ENCODE measurements at regions of chr13 and their contacts with region 1.

Region 1: GRCh38 chr13:105863300-105863920 is 672.1 kb downstream of the EFNB2 start:
- DNase-seq: no peak
- H3K4me3 ChIP-seq: no peak overlapping the region
- H3K27ac ChIP-seq: no peak overlapping the region
- H3K4me1 ChIP-seq: no peaks in the 10 kb centered on the region
- H3K27me3 ChIP-seq: no peaks in the 10 kb centered on the region
- CTCF ChIP-seq: no peak

Region 2: DNA sequence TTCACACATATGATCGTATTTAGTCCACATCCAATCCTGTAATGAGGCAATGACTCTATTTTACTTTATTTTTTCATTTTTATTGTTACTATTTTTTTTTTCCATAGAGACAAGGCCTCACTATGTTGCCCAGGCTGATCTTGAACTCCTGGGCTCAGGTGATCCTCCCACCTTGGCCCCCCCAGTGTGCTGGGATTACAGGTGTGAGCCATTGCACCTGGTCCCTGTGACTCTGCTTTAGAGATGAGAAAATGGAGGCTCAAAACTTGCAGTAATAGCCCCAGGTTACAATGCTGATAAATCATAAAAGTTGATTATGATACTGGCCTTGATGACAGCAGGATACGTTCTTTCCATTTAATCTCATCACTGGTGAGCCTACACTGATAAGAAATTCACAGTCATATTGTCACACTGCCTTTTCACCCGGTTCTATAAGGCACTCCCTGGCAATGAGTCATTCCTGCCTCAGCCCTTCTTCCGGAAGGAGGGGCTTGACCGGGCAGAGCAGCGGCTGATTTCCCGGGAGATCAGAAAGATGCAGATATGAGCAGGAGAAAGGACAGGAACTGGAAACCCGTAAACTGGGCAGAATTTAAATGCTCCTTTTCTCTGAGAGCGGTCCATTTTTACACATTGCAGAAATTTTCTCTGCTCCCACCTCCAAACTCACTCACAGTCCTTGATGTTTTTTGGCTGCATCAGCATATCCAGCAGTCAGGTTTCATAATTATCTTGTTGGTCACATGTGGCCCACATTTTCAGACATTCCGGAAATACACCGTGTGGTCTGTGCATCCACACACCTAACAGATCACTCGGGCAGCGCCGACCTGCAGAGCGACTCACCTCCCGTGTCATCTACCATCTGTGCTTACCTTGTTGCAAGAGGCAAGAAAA is 55.7 kb after region 1 on chr13:
- CTCF ChIA-PET with region 1: no interaction called
- POLR2A ChIA-PET with region 1: no interaction called
- intact Hi-C with region 1: loop called (anchors 2 kb)
- DNase-seq: peak; percentile 50
- H3K4me3 ChIP-seq: no peak overlapping the region
- H3K27ac ChIP-seq: no peak overlapping the region
- H3K4me1 ChIP-seq: no peaks in the 10 kb centered on the region
- H3K27me3 ChIP-seq: no peaks in the 10 kb centered on the region
- CTCF ChIP-seq: no peak